ENCODE measurements at regions of chr4 and their contacts with region 1.

Region 1: GRCh38 chr4:13654158-13654797 is 26.8 kb upstream of the BOD1L1 start:
- DNase-seq: peak; percentile 62 to 93
- H3K4me3 ChIP-seq: peak overlapping the region; percentile 34 to 72 (median 64)
- H3K27ac ChIP-seq: no peak overlapping the region
- H3K4me1 ChIP-seq: no peaks in the 10 kb centered on the region; a peak in 1 of 7 replicates
- H3K27me3 ChIP-seq: no peaks in the 10 kb centered on the region
- CTCF ChIP-seq: peak; percentile 79 to 89 (median 84)
- EP300 ChIP-seq: no peak
- POLR2A ChIP-seq: no peak
- RAD21 ChIP-seq: peak; percentile 65 to 76

Region 2: GRCh38 chr4:13403833-13404232 is 250.4 kb before region 1 on chr4:
- CTCF ChIA-PET with region 1: no interaction called
- POLR2A ChIA-PET with region 1: no interaction called
- DNase-seq: no peak
- H3K4me3 ChIP-seq: no peak overlapping the region
- H3K27ac ChIP-seq: no peak overlapping the region
- H3K4me1 ChIP-seq: no peaks in the 10 kb centered on the region
- H3K27me3 ChIP-seq: no peaks in the 10 kb centered on the region
- CTCF ChIP-seq: no peak
- EP300 ChIP-seq: no peak
- POLR2A ChIP-seq: no peak
- RAD21 ChIP-seq: no peak

Region 3: DNA sequence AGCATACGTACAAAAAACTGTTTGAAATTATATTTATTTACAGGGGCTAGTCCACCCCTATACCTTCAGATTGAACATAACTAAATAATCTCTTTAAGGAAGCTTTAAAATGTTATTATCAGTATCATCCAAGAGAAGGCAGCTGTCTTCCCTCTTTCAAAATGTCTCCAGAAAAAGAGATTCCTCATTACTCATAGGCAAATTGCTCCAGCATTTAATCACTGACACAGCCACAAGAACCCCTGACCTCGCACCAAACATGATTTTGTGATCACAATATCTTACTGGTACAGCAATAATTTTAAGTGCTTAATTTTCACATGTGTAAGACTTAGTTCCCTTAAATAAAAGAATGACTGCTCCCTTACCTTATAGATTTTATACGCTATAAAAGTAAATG is 36.5 kb before region 1 on chr4:
- CTCF ChIA-PET with region 1: interaction called, 21 read pairs
- POLR2A ChIA-PET with region 1: interaction called, 4 read pairs
- DNase-seq: no peak
- H3K4me3 ChIP-seq: no peak overlapping the region
- H3K27ac ChIP-seq: no peak overlapping the region
- H3K4me1 ChIP-seq: no peaks in the 10 kb centered on the region
- H3K27me3 ChIP-seq: no peaks in the 10 kb centered on the region
- CTCF ChIP-seq: no peak
- EP300 ChIP-seq: no peak
- POLR2A ChIP-seq: no peak
- RAD21 ChIP-seq: no peak

Region 4: DNA sequence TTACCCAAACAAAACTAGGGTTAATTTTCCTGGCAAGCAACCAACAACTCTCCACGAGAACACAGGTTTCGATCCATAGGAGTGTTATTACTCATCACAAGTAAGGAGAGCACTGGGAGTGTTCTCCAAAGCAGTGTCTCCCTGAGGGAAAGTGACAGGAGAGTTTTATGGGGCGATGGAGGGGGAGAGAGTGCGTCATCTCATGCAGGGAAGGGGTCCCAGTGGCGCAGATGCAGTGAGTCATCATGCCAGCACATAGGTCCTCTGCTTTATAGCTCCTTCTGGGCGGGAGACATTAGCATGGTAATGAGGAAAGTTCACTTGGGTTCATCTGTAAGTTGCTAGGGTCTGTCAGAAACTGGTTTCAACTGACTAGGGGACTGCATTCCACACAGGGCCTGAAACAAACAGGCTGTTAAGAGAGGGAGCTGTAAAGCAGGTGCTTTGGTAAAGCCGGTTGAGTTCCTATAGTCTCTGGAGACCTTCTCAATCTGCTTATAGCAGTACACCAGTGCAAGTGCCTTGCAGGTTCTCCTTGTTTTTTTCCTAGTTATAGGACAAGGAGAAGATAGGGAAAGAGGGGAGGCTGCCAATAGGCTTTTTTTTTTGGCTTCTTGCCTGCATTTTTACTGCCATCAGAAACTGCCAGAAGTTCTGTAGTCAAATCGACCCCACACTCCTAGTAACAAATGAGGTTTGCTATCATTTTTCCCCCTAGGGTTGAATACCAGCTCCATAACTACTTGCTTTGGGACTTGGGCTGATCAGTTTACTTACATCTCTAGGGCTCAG is 13.9 kb before region 1 on chr4:
- CTCF ChIA-PET with region 1: interaction called, 108 read pairs
- POLR2A ChIA-PET with region 1: no interaction called
- DNase-seq: peak in 1 of 2 experiments; percentile 54
- H3K4me3 ChIP-seq: peak overlapping the region in 2 of 4 experiments; percentile 3 to 27; a peak in 1 of 8 replicates
- H3K27ac ChIP-seq: no peak overlapping the region
- H3K4me1 ChIP-seq: peaks cover 2 to 17% (median 4%) of the 10 kb centered on the region in 4 experiments; a peak in 5 of 7 replicates
- H3K27me3 ChIP-seq: no peaks in the 10 kb centered on the region
- CTCF ChIP-seq: no peak
- EP300 ChIP-seq: peak in 1 of 2 experiments; percentile 4; a peak in 1 of 3 replicates
- POLR2A ChIP-seq: no peak
- RAD21 ChIP-seq: no peak

Region 5: GRCh38 chr4:13710246-13710885 is 56.1 kb after region 1 on chr4:
- CTCF ChIA-PET with region 1: interaction called, 13 read pairs
- POLR2A ChIA-PET with region 1: no interaction called
- DNase-seq: no peak
- H3K4me3 ChIP-seq: no peak overlapping the region
- H3K27ac ChIP-seq: no peak overlapping the region
- H3K4me1 ChIP-seq: no peaks in the 10 kb centered on the region
- H3K27me3 ChIP-seq: no peaks in the 10 kb centered on the region
- CTCF ChIP-seq: no peak
- EP300 ChIP-seq: no peak
- POLR2A ChIP-seq: no peak
- RAD21 ChIP-seq: no peak

Region 6: GRCh38 chr4:13860126-13860525 is 205.8 kb after region 1 on chr4:
- CTCF ChIA-PET with region 1: interaction called, 29 read pairs
- POLR2A ChIA-PET with region 1: no interaction called
- DNase-seq: no peak
- H3K4me3 ChIP-seq: no peak overlapping the region
- H3K27ac ChIP-seq: no peak overlapping the region
- H3K4me1 ChIP-seq: no peaks in the 10 kb centered on the region; a peak in 1 of 7 replicates
- H3K27me3 ChIP-seq: peaks cover 0 to 1% (median 0%) of the 10 kb centered on the region in 4 experiments; a peak in 1 of 7 replicates
- CTCF ChIP-seq: peak in 2 of 3 experiments; percentile 36 to 53; a peak in 3 of 4 replicates
- EP300 ChIP-seq: no peak
- POLR2A ChIP-seq: no peak
- RAD21 ChIP-seq: peak; percentile 29 to 54

Region 7: DNA sequence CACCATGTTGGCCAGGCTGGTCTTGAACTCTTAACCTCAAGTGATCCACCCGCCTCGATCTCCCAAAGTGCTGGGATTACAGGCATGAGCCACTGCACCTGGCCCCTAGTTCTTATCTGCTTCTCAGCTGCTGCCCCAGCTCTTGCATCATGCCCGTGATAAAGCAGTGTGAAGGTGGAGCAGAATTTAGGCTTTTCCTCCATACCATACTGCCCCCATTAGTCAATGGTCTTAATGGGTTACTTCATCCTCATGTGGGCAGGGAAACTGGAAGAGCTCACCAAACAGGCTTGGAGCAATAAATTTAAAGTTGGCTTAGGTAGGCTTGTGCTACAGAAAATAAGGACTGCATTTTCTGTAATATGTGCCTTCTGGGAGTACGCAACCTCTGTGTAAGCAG is 610.2 kb after region 1 on chr4:
- CTCF ChIA-PET with region 1: interaction called, 14 read pairs
- POLR2A ChIA-PET with region 1: no interaction called
- DNase-seq: no peak
- H3K4me3 ChIP-seq: no peak overlapping the region
- H3K27ac ChIP-seq: no peak overlapping the region
- H3K4me1 ChIP-seq: no peaks in the 10 kb centered on the region
- H3K27me3 ChIP-seq: peaks cover 0 to 1% (median 0%) of the 10 kb centered on the region in 4 experiments; a peak in 1 of 7 replicates
- CTCF ChIP-seq: peak in 2 of 3 experiments; percentile 4 to 37; a peak in 1 of 4 replicates
- EP300 ChIP-seq: no peak
- POLR2A ChIP-seq: no peak
- RAD21 ChIP-seq: peak; percentile 55 to 63